Spleen (tissue), 13 donors: ENCODE measurements at regions of chr12 and their contacts with region 1.

Region 1: DNA sequence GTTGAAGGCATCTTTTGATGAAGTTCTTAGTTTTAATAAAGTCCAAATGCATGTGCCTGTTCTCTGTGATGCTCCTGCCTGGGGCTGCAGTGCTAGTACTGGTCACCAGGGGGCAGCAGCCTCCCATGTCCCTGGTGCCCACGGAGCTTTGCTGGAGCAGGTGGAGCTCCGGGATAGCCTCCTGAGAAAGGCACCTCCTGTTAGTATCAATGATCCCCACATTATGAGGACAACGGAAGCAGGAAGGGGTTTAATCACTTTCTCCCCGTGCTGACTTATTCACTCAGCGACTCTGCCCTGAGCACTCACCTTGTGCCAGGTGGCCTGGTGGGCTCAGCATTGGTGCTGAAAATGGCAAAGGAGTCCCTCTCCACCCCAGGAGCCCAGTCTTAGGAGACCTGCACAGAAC is 123.0 kb upstream of the PZP start:
- DNase-seq: peak; percentile 90
- H3K4me3 ChIP-seq: no peak overlapping the region
- H3K27ac ChIP-seq: no peak overlapping the region
- H3K4me1 ChIP-seq: peaks cover 0 to 13% (median 4%) of the 10 kb centered on the region in 6 donors
- H3K27me3 ChIP-seq: no peaks in the 10 kb centered on the region
- CTCF ChIP-seq: peak; percentile 90 to 98 (median 95)
- POLR2A ChIP-seq: no peak

Region 2: GRCh38 chr12:9404469-9405260 is 73.4 kb after region 1 on chr12:
- intact Hi-C with region 1: no loop called
- DNase-seq: no peak
- H3K4me3 ChIP-seq: no peak overlapping the region
- H3K27ac ChIP-seq: no peak overlapping the region
- H3K4me1 ChIP-seq: no peaks in the 10 kb centered on the region
- H3K27me3 ChIP-seq: no peaks in the 10 kb centered on the region
- CTCF ChIP-seq: no peak
- POLR2A ChIP-seq: no peak

Region 3: GRCh38 chr12:9647825-9648700 is 316.8 kb after region 1 on chr12:
- intact Hi-C with region 1: loop called (anchors 10 kb)
- DNase-seq: peak; percentile 98
- H3K4me3 ChIP-seq: peak overlapping the region; percentile 31 to 84 (median 61)
- H3K27ac ChIP-seq: peak overlapping the region; percentile 87 to 97 (median 96)
- H3K4me1 ChIP-seq: peaks cover 15 to 64% (median 42%) of the 10 kb centered on the region in 6 donors
- H3K27me3 ChIP-seq: no peaks in the 10 kb centered on the region
- CTCF ChIP-seq: peak in 4 of 11 experiments; percentile 5 to 31 (median 14)
- POLR2A ChIP-seq: peak; percentile 54 to 74 (median 61)

Region 4: GRCh38 chr12:9694241-9694640 is 363.0 kb after region 1 on chr12:
- intact Hi-C with region 1: no loop called
- DNase-seq: no peak
- H3K4me3 ChIP-seq: no peak overlapping the region
- H3K27ac ChIP-seq: peak overlapping the region in 3 of 8 donors; percentile 5 to 27 (median 24)
- H3K4me1 ChIP-seq: peaks cover 0 to 33% (median 10%) of the 10 kb centered on the region in 6 donors
- H3K27me3 ChIP-seq: no peaks in the 10 kb centered on the region
- CTCF ChIP-seq: no peak
- POLR2A ChIP-seq: no peak

Region 5: DNA sequence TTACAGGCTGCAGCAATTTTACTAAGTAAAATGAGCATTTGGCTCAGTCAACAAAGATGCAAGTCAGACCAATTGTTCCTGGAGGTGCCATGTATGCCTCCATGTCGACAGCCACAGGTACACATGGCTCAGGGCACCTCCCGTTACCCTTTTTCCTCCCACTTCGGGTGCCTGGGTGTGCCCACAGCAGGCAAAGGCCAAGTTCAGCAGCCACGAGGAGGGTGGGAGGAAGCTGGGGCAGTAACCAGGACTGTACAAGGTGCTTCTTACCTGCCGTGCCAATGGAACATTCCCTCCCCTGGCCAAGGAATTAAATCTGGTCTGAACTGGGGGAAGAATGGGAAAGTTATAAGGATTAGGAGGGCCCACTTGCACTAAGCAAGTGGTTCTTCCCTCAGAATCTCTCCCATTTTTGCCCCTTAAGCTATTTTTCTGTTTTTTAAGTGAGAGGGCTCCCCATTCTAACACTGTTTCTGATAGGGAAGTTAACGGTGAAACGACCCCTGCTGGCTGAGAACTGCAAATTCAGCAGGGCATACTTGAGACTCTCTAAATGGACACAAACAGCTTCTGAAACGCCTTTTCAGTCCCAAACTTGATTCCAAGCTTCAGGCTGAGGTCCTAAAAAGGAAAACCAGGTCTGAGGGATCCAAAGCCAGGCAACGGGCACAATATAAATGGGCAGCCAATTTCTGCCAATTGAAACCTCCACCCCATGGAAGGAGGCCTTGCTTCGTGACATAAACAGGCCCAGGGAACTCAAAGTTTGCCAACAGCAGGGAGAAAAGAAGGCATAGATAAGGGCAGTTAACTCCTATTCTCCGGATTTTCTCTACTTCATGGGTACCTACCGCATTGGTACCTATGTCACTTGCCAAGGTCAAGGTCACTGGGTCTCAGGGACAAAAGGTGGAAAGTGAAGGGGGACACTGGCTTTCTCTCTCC is 376.9 kb after region 1 on chr12:
- intact Hi-C with region 1: loop called (anchors 10 kb)
- DNase-seq: peak; percentile 80
- H3K4me3 ChIP-seq: peak overlapping the region in 1 of 8 donors; percentile 32
- H3K27ac ChIP-seq: peak overlapping the region; percentile 63 to 91 (median 78)
- H3K4me1 ChIP-seq: peaks cover 8 to 80% (median 37%) of the 10 kb centered on the region in 6 donors
- H3K27me3 ChIP-seq: no peaks in the 10 kb centered on the region
- CTCF ChIP-seq: peak; percentile 77 to 90 (median 87)
- POLR2A ChIP-seq: no peak